ENCODE measurements at regions of chr2 and their contacts with region 1.

Region 1: DNA sequence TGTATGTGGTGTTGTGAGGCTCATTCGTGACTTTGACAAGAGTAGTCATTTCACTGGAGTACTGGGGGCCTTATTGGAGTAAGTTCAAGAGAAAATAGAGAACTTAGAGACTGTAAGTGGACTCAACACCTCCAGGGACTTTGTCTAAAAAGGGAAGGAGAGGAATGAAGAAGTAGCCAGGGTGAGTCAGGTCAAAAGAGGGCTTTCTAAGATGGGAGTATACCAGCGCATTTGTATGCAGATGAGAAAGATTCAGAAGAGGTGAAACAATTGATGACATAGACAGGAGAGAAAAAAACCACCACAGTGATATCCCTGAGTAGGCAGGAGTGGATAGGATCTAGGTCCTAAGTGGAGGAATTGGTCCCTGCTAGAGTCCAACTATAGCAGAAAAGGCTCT is 246.8 kb downstream of the IKZF2 start:
- DNase-seq: no peak
- H3K4me3 ChIP-seq: no peak overlapping the region
- H3K27ac ChIP-seq: peak overlapping the region; percentile 73
- H3K4me1 ChIP-seq: peaks cover 79% of the 10 kb centered on the region
- H3K27me3 ChIP-seq: no peaks in the 10 kb centered on the region
- CTCF ChIP-seq: no peak

Region 2: GRCh38 chr2:211259831-211260476 is 1644.7 kb before region 1 on chr2:
- CTCF ChIA-PET with region 1: no interaction called
- POLR2A ChIA-PET with region 1: no interaction called
- intact Hi-C with region 1: loop called (anchors 2 kb)
- DNase-seq: peak; percentile 96
- H3K4me3 ChIP-seq: no peak overlapping the region
- H3K27ac ChIP-seq: peak overlapping the region; percentile 100
- H3K4me1 ChIP-seq: peaks cover 21% of the 10 kb centered on the region
- H3K27me3 ChIP-seq: no peaks in the 10 kb centered on the region
- CTCF ChIP-seq: no peak

Region 3: DNA sequence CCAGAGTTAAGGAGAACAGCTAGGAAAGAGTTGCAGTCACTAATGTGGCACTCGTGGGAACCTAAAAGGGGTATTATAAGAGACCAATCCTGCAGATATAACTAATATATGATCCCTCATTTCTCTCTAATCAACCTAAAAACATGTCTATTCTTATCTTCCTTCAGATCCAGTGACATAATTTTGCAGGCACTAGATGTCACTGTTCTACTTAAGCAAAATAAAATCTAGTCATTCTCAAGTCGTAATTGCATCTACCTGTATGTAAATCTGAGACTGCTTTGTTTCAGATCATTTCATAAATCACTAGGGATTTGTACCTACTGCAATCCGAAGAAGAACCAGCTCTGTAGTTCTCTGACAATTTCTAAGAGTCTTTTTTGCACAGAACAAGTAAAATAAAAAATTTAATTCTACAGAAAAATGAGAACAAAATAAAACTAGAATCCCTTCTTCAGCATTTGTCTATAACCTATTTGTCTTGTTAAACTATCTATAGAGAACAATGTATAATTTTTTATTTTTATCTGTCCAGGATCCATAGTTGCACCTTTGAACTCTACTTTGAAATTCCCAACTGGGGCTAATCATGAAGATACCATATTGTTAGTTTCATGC is 309.5 kb before region 1 on chr2:
- CTCF ChIA-PET with region 1: no interaction called
- POLR2A ChIA-PET with region 1: no interaction called
- intact Hi-C with region 1: loop called (anchors 5 kb)
- DNase-seq: peak; percentile 50
- H3K4me3 ChIP-seq: no peak overlapping the region
- H3K27ac ChIP-seq: no peak overlapping the region
- H3K4me1 ChIP-seq: peaks cover 9% of the 10 kb centered on the region
- H3K27me3 ChIP-seq: no peaks in the 10 kb centered on the region
- CTCF ChIP-seq: peak; percentile 68

Region 4: DNA sequence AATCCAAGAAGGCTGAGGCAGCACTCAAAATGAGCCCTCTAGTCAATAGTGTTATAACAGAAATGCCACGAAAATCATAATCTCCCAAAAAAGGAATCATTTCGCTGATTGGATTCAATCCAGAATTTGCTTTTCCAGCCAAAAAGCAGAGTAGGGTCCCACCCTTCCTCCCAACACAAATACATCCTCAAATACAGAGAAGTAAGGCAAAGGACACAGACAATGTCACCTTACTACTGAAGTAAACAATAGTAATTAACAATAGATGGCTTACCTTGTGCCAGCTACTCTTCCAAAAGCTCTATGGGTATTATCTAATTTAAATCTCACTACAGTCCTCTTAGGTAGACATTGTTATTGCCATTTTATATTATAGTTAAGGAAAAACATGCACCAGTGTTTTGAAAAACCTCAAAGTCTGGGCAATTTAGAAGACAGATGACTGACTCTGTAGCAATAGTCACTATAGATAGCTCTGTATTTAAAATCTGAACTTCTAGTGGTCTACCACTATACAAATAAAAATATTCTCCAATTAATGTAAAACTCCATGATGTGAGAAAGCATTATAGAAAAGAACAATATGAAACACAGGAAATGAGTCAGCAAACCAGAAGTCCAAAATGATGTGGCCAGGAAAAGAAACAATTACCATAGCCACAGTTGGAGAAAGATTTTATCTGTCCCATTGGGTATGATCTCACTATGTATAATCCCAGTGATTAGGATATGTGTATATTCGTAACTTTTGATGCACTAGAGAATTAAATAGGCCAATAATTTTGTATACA is 61.0 kb before region 1 on chr2:
- CTCF ChIA-PET with region 1: no interaction called
- POLR2A ChIA-PET with region 1: no interaction called
- intact Hi-C with region 1: loop called (anchors 2 kb)
- DNase-seq: peak; percentile 94
- H3K4me3 ChIP-seq: no peak overlapping the region
- H3K27ac ChIP-seq: peak overlapping the region; percentile 77
- H3K4me1 ChIP-seq: peaks cover 24% of the 10 kb centered on the region
- H3K27me3 ChIP-seq: no peaks in the 10 kb centered on the region
- CTCF ChIP-seq: no peak

Region 5: DNA sequence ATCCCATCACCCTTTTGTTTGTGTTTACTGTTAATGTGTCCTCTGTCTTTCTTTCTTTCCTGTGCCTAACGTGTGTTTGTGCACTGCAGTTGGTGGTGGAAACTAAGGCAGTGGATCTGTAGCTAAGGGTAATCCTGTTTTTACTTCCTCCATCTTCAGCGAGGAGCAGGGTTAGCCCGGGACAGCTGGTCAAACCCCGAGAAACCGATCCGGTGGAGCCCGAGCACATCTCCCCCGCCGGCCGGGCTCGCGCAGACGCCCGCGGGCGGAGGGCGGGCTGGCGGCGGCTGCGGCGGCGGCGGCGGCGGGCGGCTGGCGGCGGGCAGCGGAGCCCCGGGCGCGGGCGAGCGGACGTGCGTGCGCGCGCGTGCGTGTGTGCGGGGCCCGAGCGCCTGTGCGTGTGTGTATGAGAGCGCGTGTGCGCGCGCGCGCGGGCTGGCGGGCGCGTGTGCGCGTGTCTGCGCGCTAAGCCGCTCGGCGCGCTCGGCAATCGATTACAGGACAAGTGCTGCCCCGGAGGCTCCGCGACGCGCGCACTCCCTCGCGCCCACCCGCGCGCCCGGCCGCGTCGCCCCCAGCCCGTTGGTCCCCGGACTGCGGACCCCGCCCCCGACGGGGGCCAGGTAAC is 246.9 kb after region 1 on chr2 and contains the start of gene IKZF2:
- CTCF ChIA-PET with region 1: interaction called, 4 read pairs
- POLR2A ChIA-PET with region 1: interaction called, 3 read pairs
- intact Hi-C with region 1: loop called (anchors 1 kb)
- DNase-seq: peak; percentile 96
- H3K4me3 ChIP-seq: peak within 1 kb of the TSS; percentile 75
- H3K27ac ChIP-seq: peak within 1 kb of the TSS; percentile 88
- H3K4me1 ChIP-seq: peaks cover 29% of the 10 kb centered on the region
- H3K27me3 ChIP-seq: no peaks in the 10 kb centered on the region
- CTCF ChIP-seq: no peak
- total RNA-seq, gene IKZF2: 68.6 and 69.5 TPM in 2 replicates

Region 6: DNA sequence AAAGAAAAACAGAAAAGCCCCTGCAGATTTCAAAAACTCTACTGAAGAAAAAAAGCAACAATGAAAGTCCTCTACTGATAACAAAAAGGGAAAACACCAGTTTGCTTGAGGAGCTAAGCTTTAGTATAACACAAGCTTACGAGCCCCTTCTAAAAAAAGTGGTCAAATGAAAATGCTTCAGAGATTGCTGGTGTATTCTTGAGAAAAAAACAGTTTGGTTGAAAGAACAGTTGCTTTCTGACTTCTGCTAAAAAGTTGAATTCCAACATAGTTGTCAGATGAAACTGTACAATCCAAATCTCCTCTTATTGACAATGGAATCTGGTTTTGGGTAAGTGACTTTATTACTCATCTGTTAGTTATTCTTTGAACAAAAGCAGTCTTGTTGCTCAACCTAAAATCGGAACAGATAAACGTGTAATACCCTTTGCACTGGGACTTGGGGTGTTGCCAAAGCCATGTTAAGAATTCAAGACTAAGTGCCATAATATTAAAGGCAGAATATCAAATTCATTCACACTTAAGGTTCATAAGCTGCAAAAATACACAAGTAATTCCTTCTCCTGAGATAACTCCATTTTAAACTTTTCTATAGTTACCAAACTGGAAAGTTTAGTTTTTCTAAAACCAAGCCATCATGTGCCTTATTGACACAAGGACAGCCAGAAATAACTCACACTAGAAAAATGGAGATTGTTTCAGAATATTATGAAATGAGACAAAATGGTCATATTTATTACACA is 334.3 kb after region 1 on chr2:
- CTCF ChIA-PET with region 1: no interaction called
- POLR2A ChIA-PET with region 1: no interaction called
- intact Hi-C with region 1: loop called (anchors 5 kb)
- DNase-seq: peak; percentile 85
- H3K4me3 ChIP-seq: peak overlapping the region; percentile 23
- H3K27ac ChIP-seq: peak overlapping the region; percentile 76
- H3K4me1 ChIP-seq: peaks cover 56% of the 10 kb centered on the region
- H3K27me3 ChIP-seq: no peaks in the 10 kb centered on the region
- CTCF ChIP-seq: no peak